CD14-positive monocyte (primary cell): ENCODE measurements at regions of chr11 and their contacts with region 1.

Region 1: DNA sequence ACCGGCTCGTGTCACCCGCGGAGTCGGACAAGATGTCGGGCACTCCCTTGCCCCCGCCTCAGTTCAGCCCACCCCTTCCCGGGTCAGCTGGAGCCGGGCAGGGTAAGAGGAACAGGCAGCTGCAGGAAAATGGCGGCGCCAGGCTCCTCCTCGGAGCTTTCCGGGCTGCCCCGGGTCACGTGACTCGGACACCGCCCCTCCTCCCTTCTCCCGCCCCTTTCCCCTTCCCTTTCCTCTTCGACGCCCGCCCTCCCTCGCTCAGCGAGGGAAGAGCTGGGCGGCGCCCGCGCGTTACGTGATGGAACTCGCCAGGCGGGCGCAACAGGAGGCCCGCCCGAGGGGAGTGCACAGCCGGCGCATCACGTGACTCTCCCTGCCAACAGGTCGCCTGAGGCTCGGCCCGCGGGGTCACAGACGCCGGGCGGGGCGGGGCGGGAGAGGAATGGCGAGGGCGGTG is at the start of gene PICALM:
- DNase-seq: peak; percentile 99 to 100 (median 99)
- H3K4me3 ChIP-seq: peak within 1 kb of the TSS; percentile 73 to 100 (median 81)
- H3K4me3 Mint-ChIP-seq: peak within 1 kb of the TSS; percentile 99 to 100
- H3K27ac ChIP-seq: peak within 1 kb of the TSS; percentile 97 to 99
- H3K27ac Mint-ChIP-seq: peak within 1 kb of the TSS; percentile 99 to 100 (median 99)
- H3K4me1 ChIP-seq: peaks cover 32 to 38% of the 10 kb centered on the region in 2 donors
- H3K4me1 Mint-ChIP-seq: peaks cover 32% of the 10 kb centered on the region
- H3K27me3 ChIP-seq: no peaks in the 10 kb centered on the region
- H3K27me3 Mint-ChIP-seq: peaks cover 0 to 3% (median 0%) of the 10 kb centered on the region in 3 donors
- CTCF ChIP-seq: no peak
- polyA plus RNA-seq, gene PICALM: 62.4 to 241 (median 81.0) TPM

Region 2: GRCh38 chr11:86047275-86047991 is 21.5 kb before region 1 on chr11:
- intact Hi-C with region 1: loop called in 1 of 2 experiments (anchors 2 kb)
- DNase-seq: peak; percentile 69 to 87 (median 87)
- H3K4me3 ChIP-seq: peak overlapping the region in 1 of 3 experiments; percentile 41
- H3K4me3 Mint-ChIP-seq: peak overlapping the region; percentile 5 to 59
- H3K27ac ChIP-seq: peak overlapping the region; percentile 54 to 75
- H3K27ac Mint-ChIP-seq: peak overlapping the region; percentile 86 to 93 (median 90)
- H3K4me1 ChIP-seq: peaks cover 75 to 95% of the 10 kb centered on the region in 2 donors
- H3K4me1 Mint-ChIP-seq: peaks cover 92% of the 10 kb centered on the region
- H3K27me3 ChIP-seq: no peaks in the 10 kb centered on the region
- H3K27me3 Mint-ChIP-seq: no peaks in the 10 kb centered on the region
- CTCF ChIP-seq: no peak

Region 3: DNA sequence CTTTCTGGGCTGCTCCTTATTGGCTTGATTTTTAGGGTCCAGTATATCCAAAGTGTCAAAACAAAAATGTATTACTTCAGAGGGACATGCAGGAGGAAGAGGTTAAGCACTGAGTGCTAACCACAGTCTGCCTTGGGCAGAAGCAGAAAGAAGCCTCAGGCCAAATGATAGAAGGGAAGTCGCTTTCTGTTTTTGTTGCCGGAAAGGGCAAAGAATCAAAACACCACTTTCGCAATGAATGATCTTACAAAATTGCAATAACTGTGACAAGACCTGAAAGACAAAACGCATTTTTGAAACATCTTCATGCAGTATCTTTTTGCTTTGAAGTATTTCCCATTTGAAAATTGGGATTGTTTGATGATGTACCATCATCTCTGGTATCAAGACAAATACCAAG is 70.0 kb after region 1 on chr11:
- intact Hi-C with region 1: loop called (anchors 5 to 10 kb)
- DNase-seq: peak; percentile 80 to 94 (median 85)
- H3K4me3 ChIP-seq: peak overlapping the region in 1 of 3 experiments; percentile 18
- H3K4me3 Mint-ChIP-seq: peak overlapping the region in 1 of 2 donors; percentile 58
- H3K27ac ChIP-seq: peak overlapping the region; percentile 3 to 93
- H3K27ac Mint-ChIP-seq: peak overlapping the region; percentile 92 to 99 (median 97)
- H3K4me1 ChIP-seq: peaks cover 98 to 100% of the 10 kb centered on the region in 2 donors
- H3K4me1 Mint-ChIP-seq: peaks cover 96% of the 10 kb centered on the region
- H3K27me3 ChIP-seq: no peaks in the 10 kb centered on the region
- H3K27me3 Mint-ChIP-seq: no peaks in the 10 kb centered on the region
- CTCF ChIP-seq: no peak

Region 4: GRCh38 chr11:86202013-86202336 is 133.0 kb after region 1 on chr11:
- intact Hi-C with region 1: loop called (anchors 5 kb)
- DNase-seq: peak; percentile 62 to 73 (median 69)
- H3K4me3 ChIP-seq: peak overlapping the region; percentile 34 to 74 (median 71)
- H3K4me3 Mint-ChIP-seq: no peak overlapping the region
- H3K27ac ChIP-seq: peak overlapping the region; percentile 89 to 95
- H3K27ac Mint-ChIP-seq: no peak overlapping the region
- H3K4me1 ChIP-seq: peaks cover 64 to 78% of the 10 kb centered on the region in 2 donors
- H3K4me1 Mint-ChIP-seq: peaks cover 19% of the 10 kb centered on the region
- H3K27me3 ChIP-seq: no peaks in the 10 kb centered on the region
- H3K27me3 Mint-ChIP-seq: no peaks in the 10 kb centered on the region
- CTCF ChIP-seq: no peak

Region 5: DNA sequence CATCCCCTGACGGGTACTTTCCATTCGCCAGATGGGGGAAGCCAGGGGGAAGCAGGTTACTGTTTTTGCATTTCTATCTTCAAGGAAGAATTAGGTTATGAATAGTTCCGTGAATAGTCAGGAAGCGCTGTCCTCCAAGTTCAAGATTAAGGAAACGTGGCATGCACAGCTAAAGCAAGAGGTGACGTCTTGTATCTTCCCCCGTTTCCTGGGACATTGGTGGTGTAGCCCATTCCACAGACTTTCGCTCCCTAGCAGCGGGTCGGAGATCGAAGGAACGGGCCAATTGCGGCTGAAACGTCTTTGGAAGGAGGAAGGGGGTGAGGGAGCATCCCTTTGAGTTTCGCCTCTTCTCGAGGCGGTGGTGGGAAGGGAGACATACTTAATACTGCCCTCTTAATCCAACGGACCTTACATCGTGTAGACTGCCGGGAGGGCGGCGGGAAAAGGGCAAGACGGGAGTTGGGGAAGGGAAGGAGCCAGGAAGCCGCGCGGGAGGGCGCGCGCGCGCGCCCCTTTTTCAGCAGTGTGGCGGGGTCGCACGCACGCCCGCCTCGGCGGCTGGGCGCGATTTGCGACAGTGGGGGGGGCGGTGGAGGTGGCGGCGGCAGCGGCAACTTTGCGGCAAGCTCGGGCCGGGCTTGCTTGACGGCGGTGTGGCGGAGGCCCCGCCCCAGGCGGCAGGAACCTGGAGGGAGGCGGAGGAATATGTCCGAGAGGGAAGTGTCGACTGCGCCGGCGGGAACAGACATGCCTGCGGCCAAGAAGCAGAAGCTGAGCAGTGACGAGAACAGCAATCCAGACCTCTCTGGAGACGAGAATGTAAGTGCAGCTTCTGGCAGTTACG is 175.8 kb after region 1 on chr11 and contains the start of gene EED:
- intact Hi-C with region 1: loop called in 1 of 2 experiments (anchors 1 kb)
- DNase-seq: peak; percentile 93 to 96 (median 95)
- H3K4me3 ChIP-seq: peak within 1 kb of the TSS; percentile 69 to 100 (median 99)
- H3K4me3 Mint-ChIP-seq: peak within 1 kb of the TSS in 1 of 2 donors; percentile 20
- H3K27ac ChIP-seq: peak within 1 kb of the TSS; percentile 95 to 99
- H3K27ac Mint-ChIP-seq: no peak within 1 kb of the TSS
- H3K4me1 ChIP-seq: peaks cover 23 to 25% of the 10 kb centered on the region in 2 donors
- H3K4me1 Mint-ChIP-seq: peaks cover 29% of the 10 kb centered on the region
- H3K27me3 ChIP-seq: no peaks in the 10 kb centered on the region
- H3K27me3 Mint-ChIP-seq: peaks cover 0 to 3% (median 0%) of the 10 kb centered on the region in 3 donors
- CTCF ChIP-seq: no peak
- polyA plus RNA-seq, gene EED: 2.3 to 17.8 (median 5.1) TPM